ENCODE measurements at regions of chr4 and their contacts with region 1.

Region 1: DNA sequence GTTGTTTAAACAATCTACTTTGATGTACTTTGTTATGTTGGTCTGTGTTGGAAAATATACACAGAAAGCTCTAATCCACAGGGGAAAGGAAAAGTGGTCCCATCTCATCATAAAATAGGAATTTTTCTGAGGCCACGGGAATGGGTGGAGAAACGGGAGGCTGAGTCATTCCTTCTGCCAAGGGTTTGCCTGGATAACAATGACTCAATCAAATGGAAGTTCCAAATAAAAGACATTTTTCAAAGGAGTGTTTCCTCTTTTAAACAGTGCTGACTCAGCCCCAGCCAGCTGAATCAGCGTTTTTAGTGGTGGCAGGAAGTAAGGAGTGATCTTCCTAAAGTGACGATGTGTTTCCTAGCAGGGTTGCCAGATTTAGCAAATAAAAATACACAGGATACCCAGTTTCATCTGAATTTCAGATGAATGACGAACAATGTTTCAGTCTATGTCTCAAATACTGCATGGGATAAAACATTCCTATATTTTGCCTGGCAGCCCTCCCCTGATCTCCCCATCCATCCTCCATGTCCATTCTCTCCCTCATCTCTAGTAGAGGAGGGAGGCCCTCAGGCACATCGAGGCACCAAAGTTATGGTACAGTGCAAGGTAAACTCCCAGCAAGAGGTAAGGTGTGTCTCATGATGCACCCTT is 345.4 kb upstream of the GATB start:
- DNase-seq: peak in 4 of 10 donors; percentile 58 to 74 (median 63)
- H3K4me3 ChIP-seq: no peak overlapping the region
- H3K27ac ChIP-seq: peak overlapping the region in 38 of 59 donors; percentile 4 to 93 (median 66)
- H3K27me3 ChIP-seq: no peaks in the 10 kb centered on the region
- CTCF ChIP-seq: no peak

Region 2: DNA sequence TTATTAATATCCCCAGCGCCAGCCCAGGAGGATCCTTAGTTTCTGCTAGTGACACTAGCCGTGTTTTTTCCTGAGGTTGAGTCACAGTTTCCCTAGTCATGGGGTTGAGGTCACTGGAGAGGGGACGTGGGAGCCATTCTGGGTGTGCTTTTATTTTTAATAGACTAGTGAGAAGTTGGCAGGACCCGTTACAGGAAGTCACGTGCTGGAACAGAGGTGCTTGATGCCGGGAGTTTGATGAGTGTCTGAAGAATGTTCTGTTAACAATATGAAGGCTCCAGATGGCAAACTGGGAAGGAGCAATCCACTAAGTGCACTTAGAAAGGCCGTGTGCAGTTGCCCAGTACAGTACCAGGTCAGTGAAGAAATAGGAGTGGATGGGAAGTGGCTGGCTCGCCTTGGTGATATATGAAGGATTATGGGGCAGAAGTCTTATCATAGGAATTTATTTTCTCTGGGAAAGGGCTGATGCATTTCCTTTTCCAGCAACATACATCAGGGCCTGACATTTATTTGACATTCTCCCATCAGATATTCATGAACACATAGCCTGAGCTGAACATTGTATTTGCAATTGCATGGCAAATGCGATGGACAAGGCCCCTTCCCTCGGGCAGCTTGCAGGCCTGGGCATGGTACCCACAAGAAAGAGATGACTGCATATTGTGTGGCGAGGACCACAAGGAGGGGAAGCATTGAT is 137.8 kb after region 1 on chr4:
- intact Hi-C with region 1: no loop called
- DNase-seq: no peak
- H3K4me3 ChIP-seq: no peak overlapping the region
- H3K27ac ChIP-seq: no peak overlapping the region
- H3K27me3 ChIP-seq: no peaks in the 10 kb centered on the region
- CTCF ChIP-seq: no peak

Region 3: GRCh38 chr4:152352622-152353116 is 246.4 kb after region 1 on chr4:
- intact Hi-C with region 1: loop called in 1 of 2 experiments (anchors 10 kb)
- DNase-seq: peak in 9 of 10 donors; percentile 33 to 79 (median 50)
- H3K4me3 ChIP-seq: peak overlapping the region; percentile 14 to 78 (median 61)
- H3K27ac ChIP-seq: peak overlapping the region in 57 of 59 donors; percentile 7 to 92 (median 77)
- H3K27me3 ChIP-seq: no peaks in the 10 kb centered on the region
- CTCF ChIP-seq: peak in 3 of 56 donors; percentile 7 to 19 (median 15)

Measured in dorsolateral prefrontal cortex (tissue), 120 donors.